ENCODE measurements at regions of chr9 and their contacts with region 1.

Region 1: GRCh38 chr9:93860694-93861658 is 94.2 kb downstream of the BARX1 start:
- DNase-seq: no peak
- H3K4me3 ChIP-seq: no peak overlapping the region
- H3K27ac ChIP-seq: no peak overlapping the region
- H3K27me3 ChIP-seq: peaks cover 15% of the 10 kb centered on the region
- CTCF ChIP-seq: no peak

Region 2: DNA sequence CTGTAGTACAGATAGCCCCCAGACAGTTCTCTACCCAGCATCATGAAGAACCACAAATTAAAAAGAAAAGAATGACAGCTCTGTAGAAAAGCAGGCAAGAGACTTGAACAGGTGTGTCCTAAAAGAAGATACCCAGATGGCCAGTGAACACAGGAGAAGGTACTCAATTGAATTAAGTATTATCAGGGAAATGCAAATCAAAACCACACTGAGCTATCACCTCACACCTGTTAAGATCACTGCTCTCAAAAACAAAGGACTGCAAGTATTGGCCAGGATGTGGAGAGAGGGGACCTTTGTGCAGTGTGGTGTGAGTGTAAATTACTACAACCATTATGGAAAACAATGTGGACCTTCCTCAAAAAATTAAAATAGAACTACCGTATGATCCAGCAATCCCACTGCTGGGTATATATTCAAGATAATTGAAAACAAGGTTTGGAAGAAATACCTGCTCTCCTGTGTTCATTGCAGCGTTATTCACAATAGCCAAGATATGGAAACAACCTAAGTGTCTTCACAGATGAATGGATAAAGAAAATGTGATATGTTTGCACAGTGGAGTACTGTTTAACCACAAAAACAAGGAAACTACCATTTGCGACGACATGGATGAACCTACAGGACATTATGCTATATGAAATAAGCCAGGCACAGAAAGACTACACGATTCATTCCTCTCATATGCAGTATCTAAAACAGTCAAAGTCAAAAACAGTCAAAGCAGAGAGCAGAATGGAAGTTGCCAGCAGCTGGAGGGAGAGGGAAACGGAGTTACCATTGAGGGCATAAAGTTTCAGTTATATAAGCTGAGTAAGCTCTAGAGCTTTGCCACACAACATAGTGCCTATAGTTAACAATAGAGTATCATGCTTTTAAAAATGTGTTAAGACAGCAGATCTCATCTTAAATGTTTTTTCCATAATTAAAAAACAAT is 574.5 kb before region 1 on chr9:
- CTCF ChIA-PET with region 1: interaction called, 14 read pairs
- POLR2A ChIA-PET with region 1: no interaction called
- DNase-seq: no peak
- H3K4me3 ChIP-seq: no peak overlapping the region
- H3K27ac ChIP-seq: no peak overlapping the region
- H3K27me3 ChIP-seq: no peaks in the 10 kb centered on the region
- CTCF ChIP-seq: no peak

Measured in AG04450 (cell line).